Posterior cingulate gyrus (tissue), 11 donors: ENCODE measurements at regions of chr18 and their contacts with region 1.

Region 1: GRCh38 chr18:36809590-36810381 is 19.0 kb downstream of the TPGS2 start:
- DNase-seq: peak in 5 of 10 donors; percentile 12 to 79 (median 21)

Region 2: DNA sequence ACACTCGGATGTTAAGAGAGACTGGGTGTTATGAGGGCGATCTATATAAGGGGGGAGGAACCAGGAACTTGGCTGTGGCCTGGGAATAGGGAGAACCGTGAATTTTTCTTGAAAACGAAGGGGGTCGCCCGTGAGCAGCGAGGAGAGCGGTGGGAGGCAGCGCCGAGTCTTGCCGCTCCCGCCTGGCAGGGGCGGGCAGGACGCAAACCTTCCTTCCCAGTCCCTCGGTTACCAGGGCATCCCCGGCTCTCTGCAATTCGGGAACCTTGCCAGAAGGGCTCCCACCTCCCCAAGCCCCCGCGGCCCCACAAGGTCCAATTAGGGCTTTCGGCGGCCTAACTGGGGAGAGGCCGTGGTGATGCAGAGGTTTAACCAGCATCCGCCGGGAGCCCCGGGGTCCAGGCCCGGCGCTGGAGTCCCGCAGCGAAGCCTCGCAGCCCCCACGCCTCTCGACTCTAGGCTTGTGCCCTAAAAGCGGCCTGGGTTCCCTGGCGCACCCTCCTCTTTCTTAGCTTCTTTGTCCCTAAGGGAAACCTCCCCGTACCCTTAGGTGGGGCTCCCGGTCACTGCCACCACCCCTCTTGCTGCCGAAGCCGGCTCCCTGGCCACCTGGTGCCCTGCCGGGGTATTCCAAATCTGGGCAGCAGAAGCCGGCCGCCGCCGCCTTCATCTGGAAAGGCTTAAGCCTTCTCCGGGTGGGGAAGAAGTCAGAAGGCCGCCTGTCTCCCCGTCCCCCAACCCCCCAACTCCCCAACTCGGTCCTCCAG is 513.0 kb before region 1 on chr18:
- intact Hi-C with region 1: loop called (anchors 2 kb)
- DNase-seq: peak; percentile 68 to 96 (median 84)

Region 3: DNA sequence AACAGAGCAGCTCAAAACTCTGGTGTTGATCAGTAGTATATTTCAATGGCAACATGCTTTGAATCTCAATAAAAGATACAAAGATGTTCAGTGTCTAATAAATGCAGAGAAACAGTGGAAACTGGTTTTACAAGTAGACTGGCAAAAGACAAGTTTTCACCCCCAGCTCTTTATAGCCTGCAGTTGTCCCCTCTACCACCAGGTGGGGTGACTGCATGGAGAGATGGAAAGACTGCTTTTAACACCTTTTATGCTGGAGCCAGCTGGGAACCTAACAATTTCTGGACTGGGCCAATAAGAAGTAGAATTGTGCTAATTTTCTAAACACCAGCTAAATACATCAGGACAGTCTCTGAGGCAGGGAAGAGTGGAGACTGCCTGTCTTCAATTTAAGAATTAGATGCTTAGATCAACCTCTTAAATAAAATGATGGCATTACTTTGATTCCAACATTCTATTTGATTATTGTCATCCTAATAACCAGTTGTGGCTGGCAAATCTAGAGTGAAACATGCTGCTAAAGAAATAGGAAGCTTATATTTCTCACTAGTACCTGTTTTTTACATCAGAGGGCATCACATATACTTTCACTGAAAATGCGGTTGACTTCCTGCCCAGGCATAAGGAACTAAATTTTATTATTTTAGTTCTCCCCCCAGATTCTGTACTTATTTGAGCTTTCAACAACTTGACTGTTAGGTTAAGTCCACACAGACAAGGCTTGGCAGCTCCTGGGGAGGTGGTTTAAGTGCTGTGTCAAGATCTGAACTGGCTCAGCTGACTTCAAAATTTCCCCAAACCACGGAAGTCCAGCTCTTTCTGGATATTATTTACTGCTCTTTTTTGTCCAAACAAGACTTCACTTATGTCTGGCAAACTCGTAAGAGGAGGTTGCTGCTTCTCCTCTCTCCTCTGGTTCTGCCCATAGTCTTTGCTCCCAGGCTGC is 121.5 kb before region 1 on chr18:
- intact Hi-C with region 1: loop called (anchors 2 kb)
- DNase-seq: peak in 7 of 10 donors; percentile 55 to 87 (median 62)

Region 4: GRCh38 chr18:36769611-36770314 is 40.0 kb before region 1 on chr18:
- intact Hi-C with region 1: loop called (anchors 5 kb)
- DNase-seq: peak in 1 of 10 donors; percentile 66